GM12878 (cell line): ENCODE measurements at regions of chr2 and their contacts with region 1.

Region 1: DNA sequence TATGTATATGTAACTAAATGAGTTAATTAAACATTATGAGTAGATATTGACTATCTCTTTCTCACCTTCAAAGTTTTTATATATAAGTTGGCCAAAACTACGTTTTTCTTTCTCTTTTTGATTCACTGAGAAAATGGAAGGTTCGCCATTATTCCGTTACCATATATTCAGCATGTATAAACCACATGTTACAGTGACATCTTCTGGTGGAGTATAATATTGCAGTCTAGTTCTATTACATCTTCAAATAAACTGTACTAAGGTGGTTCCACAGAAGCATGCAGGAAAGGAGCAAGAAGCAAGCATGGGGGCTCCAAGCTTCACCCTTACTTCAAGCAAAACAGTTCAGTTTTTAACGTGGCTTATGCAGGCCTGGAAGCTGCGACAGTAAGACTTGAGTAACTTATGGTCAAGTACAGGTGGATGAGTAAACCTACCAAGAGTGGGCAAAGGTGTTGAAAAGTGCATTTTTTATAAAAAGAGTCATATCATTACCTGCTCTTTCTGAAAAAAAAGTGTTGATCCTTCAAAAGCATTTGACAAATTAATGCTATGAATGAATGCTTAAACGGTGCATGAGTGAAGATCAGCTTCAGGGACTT is 129.8 kb upstream of the RAB6C start:
- DNase-seq: peak; percentile 40
- ATAC-seq: peak; percentile 89
- H3K4me3 ChIP-seq: no peak overlapping the region
- H3K27ac ChIP-seq: no peak overlapping the region
- H3K4me1 ChIP-seq: no peaks in the 10 kb centered on the region
- H3K27me3 ChIP-seq: peaks cover 0 to 2% of the 10 kb centered on the region in 2 experiments; a peak in 1 of 4 replicates
- CTCF ChIP-seq: peak; percentile 49 to 75 (median 68); a peak in 5 of 6 replicates
- EP300 ChIP-seq: no peak
- POLR2A ChIP-seq: no peak
- RAD21 ChIP-seq: peak; percentile 67

Region 2: GRCh38 chr2:128321784-128322714 is 1527.6 kb before region 1 on chr2:
- CTCF ChIA-PET with region 1: no interaction called
- POLR2A ChIA-PET with region 1: no interaction called
- RAD21 ChIA-PET with region 1: no interaction called
- SMC1A ChIA-PET with region 1: no interaction called
- in situ Hi-C with region 1: no loop called
- intact Hi-C with region 1: loop called (anchors 10 kb)
- DNase-seq: no peak
- ATAC-seq: peak; percentile 71
- H3K4me3 ChIP-seq: peak overlapping the region; percentile 70; the same call in 1 of the 2 replicates
- H3K27ac ChIP-seq: peak overlapping the region; percentile 18; the same call in 1 of the 2 replicates
- H3K4me1 ChIP-seq: peaks cover 3% of the 10 kb centered on the region
- H3K27me3 ChIP-seq: no peaks in the 10 kb centered on the region; a peak in 1 of 4 replicates
- CTCF ChIP-seq: peak; percentile 73 to 93 (median 93); a peak in 5 of 6 replicates
- EP300 ChIP-seq: no peak
- POLR2A ChIP-seq: peak; percentile 70
- RAD21 ChIP-seq: peak; percentile 67

Region 3: DNA sequence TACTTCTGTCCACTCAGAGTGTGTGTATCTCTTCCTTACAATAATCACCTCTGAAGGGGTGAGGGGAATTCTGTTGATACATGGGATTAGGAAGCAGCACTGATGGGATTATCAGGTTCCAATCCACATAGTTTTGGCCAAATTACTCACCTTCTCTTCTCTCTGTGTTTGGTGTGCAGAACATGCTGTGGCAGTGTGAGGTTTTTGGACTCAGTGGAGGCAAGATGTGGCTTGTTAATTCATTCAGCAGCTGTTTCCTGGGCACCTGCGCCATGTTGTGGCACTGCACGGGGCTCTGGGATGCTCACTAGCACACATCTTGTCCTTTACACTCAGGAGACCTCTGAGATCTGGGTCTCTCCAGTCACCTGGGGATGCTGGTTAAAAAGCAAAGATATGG is 1180.7 kb before region 1 on chr2:
- CTCF ChIA-PET with region 1: no interaction called
- POLR2A ChIA-PET with region 1: interaction called, 11 read pairs
- RAD21 ChIA-PET with region 1: no interaction called
- SMC1A ChIA-PET with region 1: no interaction called
- in situ Hi-C with region 1: no loop called
- intact Hi-C with region 1: no loop called
- DNase-seq: no peak
- ATAC-seq: no peak
- H3K4me3 ChIP-seq: no peak overlapping the region
- H3K27ac ChIP-seq: no peak overlapping the region
- H3K4me1 ChIP-seq: no peaks in the 10 kb centered on the region
- H3K27me3 ChIP-seq: no peaks in the 10 kb centered on the region; a peak in 1 of 4 replicates
- CTCF ChIP-seq: no peak
- EP300 ChIP-seq: no peak
- POLR2A ChIP-seq: no peak
- RAD21 ChIP-seq: no peak

Region 4: DNA sequence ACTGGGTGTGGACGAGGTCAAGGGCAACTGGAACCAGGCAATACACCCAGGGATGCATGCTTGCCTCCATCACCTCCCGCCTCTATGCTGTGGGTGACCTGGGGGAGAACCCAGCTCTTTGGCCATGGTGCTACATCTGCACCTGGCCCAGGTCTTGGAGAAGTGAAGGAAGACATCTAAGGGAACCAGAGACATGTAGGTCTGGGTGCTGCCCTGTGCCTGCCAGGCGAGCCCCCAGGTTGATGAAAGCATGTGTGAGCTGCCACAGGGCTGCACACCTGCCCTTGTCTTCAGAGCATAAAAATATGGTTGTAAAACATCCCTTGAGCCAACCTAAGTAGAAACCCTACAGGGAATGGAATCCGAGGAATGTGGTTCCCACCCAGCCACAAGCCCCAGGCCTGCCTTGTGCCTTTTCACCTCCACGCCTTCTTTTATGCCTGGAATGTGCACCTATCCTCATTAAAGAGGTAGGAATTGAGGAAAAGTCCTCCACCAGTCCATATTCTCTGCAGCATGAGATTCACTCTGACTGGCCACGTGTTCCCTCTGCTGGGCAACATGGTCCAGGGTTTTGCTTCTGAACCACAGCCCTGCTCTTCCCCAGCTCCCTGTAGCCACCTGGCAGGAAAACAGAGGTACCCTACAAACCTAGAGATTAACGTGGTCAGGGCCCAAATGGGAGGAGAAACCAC is 658.3 kb before region 1 on chr2:
- CTCF ChIA-PET with region 1: no interaction called
- POLR2A ChIA-PET with region 1: no interaction called
- RAD21 ChIA-PET with region 1: no interaction called
- SMC1A ChIA-PET with region 1: no interaction called
- in situ Hi-C with region 1: no loop called
- intact Hi-C with region 1: loop called (anchors 10 kb)
- DNase-seq: no peak
- ATAC-seq: no peak
- H3K4me3 ChIP-seq: no peak overlapping the region
- H3K27ac ChIP-seq: no peak overlapping the region
- H3K4me1 ChIP-seq: no peaks in the 10 kb centered on the region
- H3K27me3 ChIP-seq: no peaks in the 10 kb centered on the region
- CTCF ChIP-seq: no peak; a peak in 1 of 6 replicates
- EP300 ChIP-seq: no peak
- POLR2A ChIP-seq: no peak
- RAD21 ChIP-seq: no peak

Region 5: GRCh38 chr2:129396980-129397599 is 452.6 kb before region 1 on chr2:
- CTCF ChIA-PET with region 1: no interaction called
- POLR2A ChIA-PET with region 1: no interaction called
- RAD21 ChIA-PET with region 1: no interaction called
- SMC1A ChIA-PET with region 1: no interaction called
- in situ Hi-C with region 1: no loop called
- intact Hi-C with region 1: loop called (anchors 10 kb)
- DNase-seq: peak; percentile 21
- ATAC-seq: peak; percentile 94
- H3K4me3 ChIP-seq: no peak overlapping the region
- H3K27ac ChIP-seq: no peak overlapping the region
- H3K4me1 ChIP-seq: no peaks in the 10 kb centered on the region; the same call in 1 of the 2 replicates
- H3K27me3 ChIP-seq: no peaks in the 10 kb centered on the region
- CTCF ChIP-seq: peak; percentile 78 to 87 (median 81)
- EP300 ChIP-seq: no peak
- POLR2A ChIP-seq: no peak
- RAD21 ChIP-seq: peak; percentile 94

Region 6: DNA sequence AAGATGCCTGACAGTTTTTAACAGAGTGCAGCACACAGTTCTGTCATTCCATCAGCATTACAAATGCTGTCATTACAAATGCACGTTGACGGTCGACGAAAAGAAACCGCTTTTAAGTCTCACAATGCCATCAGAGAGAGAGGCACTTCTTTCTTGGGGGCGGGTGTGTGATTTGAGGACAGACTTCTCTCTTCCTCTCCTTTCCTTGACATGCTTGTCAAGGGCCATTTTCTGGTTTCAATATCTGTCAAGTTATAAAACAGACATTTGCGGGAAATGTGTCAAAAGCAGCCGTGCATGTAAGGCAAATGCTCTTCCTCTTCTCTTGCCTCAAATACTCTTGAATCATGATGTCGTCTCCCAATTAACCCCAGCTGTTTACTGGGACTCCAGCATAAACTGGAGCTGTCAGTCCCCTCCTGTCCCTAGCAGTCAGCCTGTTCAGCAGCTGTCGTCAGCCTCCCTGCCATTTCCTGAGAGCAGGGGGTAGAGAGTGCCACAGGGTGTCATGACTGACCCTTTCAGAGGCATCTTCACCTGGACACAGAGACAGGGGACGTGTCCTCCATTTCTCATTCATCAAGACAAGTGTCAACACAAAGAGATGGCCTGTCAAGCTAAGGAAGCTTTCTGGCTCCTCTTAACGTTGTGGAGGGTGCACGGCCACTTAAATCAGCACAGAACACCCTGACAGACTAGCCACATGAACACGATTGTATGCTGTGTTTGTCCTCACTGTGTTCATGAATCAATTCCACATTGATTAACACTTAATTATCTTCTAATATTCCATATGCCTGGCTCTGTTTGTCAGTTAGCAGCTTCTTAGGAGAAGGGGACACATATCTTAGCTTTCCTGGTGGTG is 175.6 kb before region 1 on chr2:
- CTCF ChIA-PET with region 1: no interaction called
- POLR2A ChIA-PET with region 1: no interaction called
- RAD21 ChIA-PET with region 1: no interaction called
- SMC1A ChIA-PET with region 1: no interaction called
- in situ Hi-C with region 1: no loop called
- intact Hi-C with region 1: no loop called
- DNase-seq: peak; percentile 38
- ATAC-seq: peak; percentile 87
- H3K4me3 ChIP-seq: no peak overlapping the region
- H3K27ac ChIP-seq: no peak overlapping the region
- H3K4me1 ChIP-seq: peaks cover 8% of the 10 kb centered on the region
- H3K27me3 ChIP-seq: no peaks in the 10 kb centered on the region; a peak in 1 of 4 replicates
- CTCF ChIP-seq: no peak
- EP300 ChIP-seq: no peak
- POLR2A ChIP-seq: no peak
- RAD21 ChIP-seq: no peak

Region 7: GRCh38 chr2:129723277-129724020 is 126.2 kb before region 1 on chr2:
- CTCF ChIA-PET with region 1: no interaction called
- POLR2A ChIA-PET with region 1: no interaction called
- RAD21 ChIA-PET with region 1: no interaction called
- SMC1A ChIA-PET with region 1: no interaction called
- in situ Hi-C with region 1: no loop called
- intact Hi-C with region 1: no loop called
- DNase-seq: no peak
- ATAC-seq: no peak
- H3K4me3 ChIP-seq: no peak overlapping the region
- H3K27ac ChIP-seq: no peak overlapping the region
- H3K4me1 ChIP-seq: no peaks in the 10 kb centered on the region
- H3K27me3 ChIP-seq: peaks cover 0 to 3% of the 10 kb centered on the region in 2 experiments; a peak in 2 of 4 replicates
- CTCF ChIP-seq: no peak
- EP300 ChIP-seq: no peak
- POLR2A ChIP-seq: no peak
- RAD21 ChIP-seq: no peak

Region 8: GRCh38 chr2:129903586-129904425 is 54.1 kb after region 1 on chr2:
- CTCF ChIA-PET with region 1: no interaction called
- POLR2A ChIA-PET with region 1: no interaction called
- RAD21 ChIA-PET with region 1: no interaction called
- SMC1A ChIA-PET with region 1: no interaction called
- in situ Hi-C with region 1: no loop called
- intact Hi-C with region 1: no loop called
- DNase-seq: no peak
- ATAC-seq: no peak; the same call in 2 of the 3 replicates
- H3K4me3 ChIP-seq: no peak overlapping the region
- H3K27ac ChIP-seq: no peak overlapping the region
- H3K4me1 ChIP-seq: no peaks in the 10 kb centered on the region
- H3K27me3 ChIP-seq: no peaks in the 10 kb centered on the region; a peak in 1 of 4 replicates
- CTCF ChIP-seq: peak in 2 of 3 experiments; percentile 4 to 18; a peak in 2 of 6 replicates
- EP300 ChIP-seq: no peak
- POLR2A ChIP-seq: no peak
- RAD21 ChIP-seq: no peak